ENCODE measurements at regions of chr16 and their contacts with region 1.

Region 1: GRCh38 chr16:86222965-86223551 is 287.3 kb upstream of the FOXF1 start:
- DNase-seq: peak; percentile 98
- ATAC-seq: peak; percentile 64
- H3K4me3 ChIP-seq: peak overlapping the region; percentile 52
- H3K27ac ChIP-seq: peak overlapping the region; percentile 99
- H3K4me1 ChIP-seq: peaks cover 33% of the 10 kb centered on the region
- H3K27me3 ChIP-seq: no peaks in the 10 kb centered on the region
- CTCF ChIP-seq: no peak
- POLR2A ChIP-seq: peak; percentile 84; the same call in 1 of the 2 replicates
- RAD21 ChIP-seq: peak; percentile 2; the same call in 1 of the 2 replicates

Region 2: GRCh38 chr16:86029131-86029741 is 193.8 kb before region 1 on chr16:
- CTCF ChIA-PET with region 1: no interaction called
- POLR2A ChIA-PET with region 1: no interaction called
- dilution Hi-C with region 1: no loop called
- in situ Hi-C with region 1: no loop called
- intact Hi-C with region 1: no loop called
- DNase-seq: peak; percentile 68
- ATAC-seq: peak; percentile 77
- H3K4me3 ChIP-seq: no peak overlapping the region
- H3K27ac ChIP-seq: no peak overlapping the region
- H3K4me1 ChIP-seq: peaks cover 9% of the 10 kb centered on the region; the same call in 1 of the 2 replicates
- H3K27me3 ChIP-seq: peaks cover 62% of the 10 kb centered on the region
- CTCF ChIP-seq: no peak
- POLR2A ChIP-seq: no peak
- RAD21 ChIP-seq: no peak

Region 3: DNA sequence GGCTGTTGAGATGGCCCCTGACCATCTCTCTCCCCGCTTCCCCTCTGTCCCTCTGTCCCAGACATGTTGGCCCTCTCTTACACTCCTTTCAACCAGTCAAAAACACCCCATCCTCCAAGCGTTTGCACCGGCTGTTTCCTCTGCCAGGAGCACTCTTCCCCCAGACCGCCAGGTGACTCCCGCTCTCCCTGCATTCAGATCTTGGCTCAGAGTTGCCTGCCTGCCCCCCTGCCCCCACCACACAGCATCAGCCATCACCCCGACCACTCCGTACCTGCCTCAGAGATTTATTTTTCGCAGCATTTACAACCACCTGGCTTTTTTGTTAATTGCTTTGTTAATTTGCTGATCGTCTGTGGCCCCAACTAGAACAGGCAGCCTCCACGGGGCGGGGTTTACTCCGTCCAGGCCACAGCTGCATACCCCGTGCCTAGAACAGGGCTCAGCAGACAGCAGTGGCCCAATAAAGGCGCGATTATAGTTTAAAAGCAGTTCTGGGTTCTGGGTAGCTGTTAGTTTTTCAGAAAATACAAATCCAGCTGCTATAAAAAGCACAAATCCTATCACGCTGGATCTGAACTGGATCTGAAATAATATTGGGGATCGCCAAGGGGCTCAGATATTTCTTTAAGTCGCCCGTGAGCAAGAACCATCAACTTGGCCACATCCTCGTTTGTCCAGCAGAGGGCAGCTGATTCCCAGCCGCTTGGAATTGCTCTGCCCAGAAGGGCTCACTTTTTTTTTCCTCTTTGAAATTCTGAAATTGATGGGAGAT is 150.5 kb before region 1 on chr16:
- CTCF ChIA-PET with region 1: no interaction called
- POLR2A ChIA-PET with region 1: no interaction called
- dilution Hi-C with region 1: no loop called
- in situ Hi-C with region 1: loop called (anchors 10 kb)
- intact Hi-C with region 1: loop called (anchors 2 kb)
- DNase-seq: peak; percentile 86
- ATAC-seq: peak; percentile 73
- H3K4me3 ChIP-seq: no peak overlapping the region
- H3K27ac ChIP-seq: 0 out of 2 replicates have a peak overlapping the region, but pooled peaks have one; percentile 1
- H3K4me1 ChIP-seq: peaks cover 17% of the 10 kb centered on the region
- H3K27me3 ChIP-seq: no peaks in the 10 kb centered on the region
- CTCF ChIP-seq: peak; percentile 90
- POLR2A ChIP-seq: 0 out of 2 replicates have a peak, but pooled peaks have one; percentile 24
- RAD21 ChIP-seq: peak; percentile 97

Region 4: GRCh38 chr16:86171329-86171728 is 51.7 kb before region 1 on chr16:
- CTCF ChIA-PET with region 1: no interaction called
- POLR2A ChIA-PET with region 1: no interaction called
- dilution Hi-C with region 1: no loop called
- in situ Hi-C with region 1: no loop called
- intact Hi-C with region 1: loop called (anchors 2 kb)
- DNase-seq: peak; percentile 99
- ATAC-seq: peak; percentile 99
- H3K4me3 ChIP-seq: no peak overlapping the region
- H3K27ac ChIP-seq: peak overlapping the region; percentile 91
- H3K4me1 ChIP-seq: peaks cover 12% of the 10 kb centered on the region
- H3K27me3 ChIP-seq: no peaks in the 10 kb centered on the region; the same call in 1 of the 2 replicates
- CTCF ChIP-seq: no peak
- POLR2A ChIP-seq: peak; percentile 58
- RAD21 ChIP-seq: no peak

Region 5: GRCh38 chr16:86300746-86301481 is 77.9 kb after region 1 on chr16:
- CTCF ChIA-PET with region 1: interaction called, 3 read pairs
- POLR2A ChIA-PET with region 1: interaction called, 6 read pairs
- dilution Hi-C with region 1: no loop called
- in situ Hi-C with region 1: loop called (anchors 10 kb)
- intact Hi-C with region 1: loop called (anchors 2 kb)
- DNase-seq: peak; percentile 85
- ATAC-seq: peak; percentile 16
- H3K4me3 ChIP-seq: peak overlapping the region; percentile 21
- H3K27ac ChIP-seq: peak overlapping the region; percentile 97
- H3K4me1 ChIP-seq: peaks cover 65% of the 10 kb centered on the region
- H3K27me3 ChIP-seq: no peaks in the 10 kb centered on the region
- CTCF ChIP-seq: no peak
- POLR2A ChIP-seq: peak; percentile 49; the same call in 1 of the 2 replicates
- RAD21 ChIP-seq: no peak

Region 6: DNA sequence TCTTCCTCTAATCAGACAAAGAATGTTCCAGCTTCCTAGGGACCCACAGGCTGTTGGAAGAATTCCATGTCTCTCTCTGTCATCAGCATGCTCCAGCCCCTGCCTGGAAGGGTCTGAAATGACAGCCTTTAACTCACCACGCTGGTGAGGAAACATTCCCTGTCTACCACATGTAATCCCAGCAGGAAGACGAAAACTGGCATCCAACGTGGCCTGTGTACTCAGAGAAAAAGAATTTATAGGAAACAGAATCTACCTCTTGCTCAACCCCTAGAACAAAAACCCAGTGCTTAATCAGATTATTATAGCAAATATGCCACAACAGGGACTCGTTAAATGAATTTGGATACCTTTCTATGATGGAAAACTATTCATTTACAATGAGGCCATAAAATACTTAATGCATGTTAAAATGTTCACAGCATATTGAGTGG is 140.0 kb after region 1 on chr16:
- CTCF ChIA-PET with region 1: no interaction called
- POLR2A ChIA-PET with region 1: no interaction called
- dilution Hi-C with region 1: no loop called
- in situ Hi-C with region 1: no loop called
- intact Hi-C with region 1: loop called (anchors 5 kb)
- DNase-seq: peak; percentile 98
- ATAC-seq: peak; percentile 81
- H3K4me3 ChIP-seq: no peak overlapping the region
- H3K27ac ChIP-seq: peak overlapping the region; percentile 81
- H3K4me1 ChIP-seq: peaks cover 30% of the 10 kb centered on the region
- H3K27me3 ChIP-seq: no peaks in the 10 kb centered on the region
- CTCF ChIP-seq: 0 out of 2 replicates have a peak, but pooled peaks have one; percentile 11
- POLR2A ChIP-seq: no peak
- RAD21 ChIP-seq: peak; percentile 39

Region 7: GRCh38 chr16:86457501-86458148 is 234.6 kb after region 1 on chr16:
- CTCF ChIA-PET with region 1: interaction called, 3 read pairs
- POLR2A ChIA-PET with region 1: interaction called, 9 read pairs
- dilution Hi-C with region 1: no loop called
- in situ Hi-C with region 1: no loop called
- intact Hi-C with region 1: loop called (anchors 2 kb)
- DNase-seq: peak; percentile 99
- ATAC-seq: peak; percentile 61
- H3K4me3 ChIP-seq: no peak overlapping the region
- H3K27ac ChIP-seq: peak overlapping the region; percentile 97
- H3K4me1 ChIP-seq: peaks cover 28% of the 10 kb centered on the region
- H3K27me3 ChIP-seq: no peaks in the 10 kb centered on the region
- CTCF ChIP-seq: no peak
- POLR2A ChIP-seq: peak; percentile 72
- RAD21 ChIP-seq: no peak; the same call in 1 of the 2 replicates

Measured in IMR-90 (cell line).